ENCODE measurements at regions of chr11 and their contacts with region 1.

Region 1: DNA sequence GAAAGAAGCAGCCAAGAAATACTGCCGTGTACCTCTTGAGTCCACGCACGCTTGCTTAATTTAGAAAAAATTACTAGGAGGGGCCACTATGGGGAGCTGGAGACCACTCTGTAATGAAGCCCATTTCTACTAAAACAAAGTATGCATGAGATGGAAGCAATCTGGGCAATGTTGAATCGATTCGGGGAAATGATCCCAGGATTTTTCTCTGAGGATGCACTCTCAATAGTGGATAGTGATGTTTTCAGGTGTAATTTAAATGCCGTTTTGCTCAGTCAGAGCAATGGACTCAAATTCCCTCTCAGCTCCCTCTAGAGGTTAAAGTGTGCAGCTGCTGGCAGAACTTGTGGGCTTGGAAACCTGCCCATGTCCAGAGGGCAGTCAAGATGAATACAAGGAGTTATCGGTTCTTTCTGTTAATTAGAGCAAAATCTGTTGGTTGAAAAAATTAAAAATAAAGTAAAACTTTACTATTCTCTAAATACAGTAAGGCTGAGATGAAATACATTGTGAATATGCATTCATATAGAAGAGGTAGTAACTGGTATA is 64.1 kb downstream of the ME3 start:
- DNase-seq: peak; percentile 91
- H3K4me3 ChIP-seq: peak overlapping the region in 1 of 3 experiments; percentile 10
- H3K27ac ChIP-seq: peak overlapping the region; percentile 87
- H3K4me1 ChIP-seq: peaks cover 37% of the 10 kb centered on the region
- H3K27me3 ChIP-seq: no peaks in the 10 kb centered on the region
- CTCF ChIP-seq: peak; percentile 77 to 85
- POLR2A ChIP-seq: no peak

Region 2: DNA sequence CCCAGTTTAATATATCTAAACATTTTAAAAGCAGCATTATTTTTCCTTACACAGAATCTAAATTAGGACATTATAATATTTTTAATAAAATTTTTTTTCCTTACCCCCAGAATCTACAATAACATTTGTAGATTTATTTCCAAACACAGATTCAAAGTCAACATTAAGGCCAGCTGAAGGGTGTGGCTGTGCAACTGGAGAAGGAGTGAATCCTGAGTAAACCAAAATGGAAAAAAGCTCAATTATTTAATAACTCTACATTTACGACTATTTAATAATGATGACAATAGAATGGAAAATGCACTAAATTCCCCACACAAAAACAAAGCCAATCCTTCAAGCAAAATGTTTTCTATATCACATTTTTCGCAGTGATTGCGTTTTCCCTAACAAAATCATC is 624.6 kb before region 1 on chr11:
- CTCF ChIA-PET with region 1: no interaction called
- POLR2A ChIA-PET with region 1: no interaction called
- dilution Hi-C with region 1: no loop called
- intact Hi-C with region 1: no loop called
- DNase-seq: no peak
- H3K4me3 ChIP-seq: no peak overlapping the region
- H3K27ac ChIP-seq: no peak overlapping the region
- H3K4me1 ChIP-seq: no peaks in the 10 kb centered on the region
- H3K27me3 ChIP-seq: no peaks in the 10 kb centered on the region
- CTCF ChIP-seq: no peak
- POLR2A ChIP-seq: no peak

Region 3: DNA sequence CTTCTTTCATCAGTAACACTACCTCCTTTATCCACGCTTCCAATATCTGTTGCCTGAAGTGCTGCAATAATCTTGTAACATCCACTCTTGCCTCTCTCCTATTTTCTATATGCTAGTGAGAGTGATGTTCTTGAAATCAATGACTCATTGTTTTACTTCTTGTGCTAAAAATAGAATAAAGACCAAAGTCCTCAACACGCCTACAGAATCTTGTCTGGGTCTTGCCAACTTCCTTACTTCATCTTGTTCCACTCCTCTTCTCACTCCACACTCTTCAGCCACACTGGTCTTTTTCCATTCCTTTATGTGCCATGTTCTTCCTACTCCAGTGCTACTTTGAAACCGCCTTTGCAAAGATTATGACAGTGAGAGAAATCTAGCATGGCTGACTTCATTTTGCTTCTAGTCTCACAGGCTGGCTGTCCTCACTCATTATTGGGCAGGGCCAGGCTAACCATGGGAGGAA is 97.2 kb before region 1 on chr11:
- CTCF ChIA-PET with region 1: interaction called, 12 read pairs
- POLR2A ChIA-PET with region 1: no interaction called
- dilution Hi-C with region 1: no loop called
- intact Hi-C with region 1: loop called (anchors 2 kb)
- DNase-seq: peak; percentile 61
- H3K4me3 ChIP-seq: no peak overlapping the region
- H3K27ac ChIP-seq: no peak overlapping the region
- H3K4me1 ChIP-seq: peaks cover 31% of the 10 kb centered on the region
- H3K27me3 ChIP-seq: no peaks in the 10 kb centered on the region
- CTCF ChIP-seq: no peak
- POLR2A ChIP-seq: no peak

Region 4: GRCh38 chr11:86551286-86552092 is 56.8 kb before region 1 on chr11:
- CTCF ChIA-PET with region 1: interaction called, 18 read pairs
- POLR2A ChIA-PET with region 1: no interaction called
- dilution Hi-C with region 1: no loop called
- intact Hi-C with region 1: no loop called
- DNase-seq: peak; percentile 96
- H3K4me3 ChIP-seq: no peak overlapping the region
- H3K27ac ChIP-seq: peak overlapping the region; percentile 71
- H3K4me1 ChIP-seq: peaks cover 44% of the 10 kb centered on the region
- H3K27me3 ChIP-seq: no peaks in the 10 kb centered on the region
- CTCF ChIP-seq: no peak
- POLR2A ChIP-seq: no peak

Region 5: GRCh38 chr11:86592659-86593451 is 15.5 kb before region 1 on chr11:
- CTCF ChIA-PET with region 1: interaction called, 67 read pairs
- POLR2A ChIA-PET with region 1: no interaction called
- dilution Hi-C with region 1: no loop called
- intact Hi-C with region 1: loop called (anchors 2 kb)
- DNase-seq: peak; percentile 99
- H3K4me3 ChIP-seq: no peak overlapping the region
- H3K27ac ChIP-seq: peak overlapping the region; percentile 99
- H3K4me1 ChIP-seq: peaks cover 60% of the 10 kb centered on the region
- H3K27me3 ChIP-seq: no peaks in the 10 kb centered on the region
- CTCF ChIP-seq: no peak
- POLR2A ChIP-seq: peak; percentile 12

Region 6: DNA sequence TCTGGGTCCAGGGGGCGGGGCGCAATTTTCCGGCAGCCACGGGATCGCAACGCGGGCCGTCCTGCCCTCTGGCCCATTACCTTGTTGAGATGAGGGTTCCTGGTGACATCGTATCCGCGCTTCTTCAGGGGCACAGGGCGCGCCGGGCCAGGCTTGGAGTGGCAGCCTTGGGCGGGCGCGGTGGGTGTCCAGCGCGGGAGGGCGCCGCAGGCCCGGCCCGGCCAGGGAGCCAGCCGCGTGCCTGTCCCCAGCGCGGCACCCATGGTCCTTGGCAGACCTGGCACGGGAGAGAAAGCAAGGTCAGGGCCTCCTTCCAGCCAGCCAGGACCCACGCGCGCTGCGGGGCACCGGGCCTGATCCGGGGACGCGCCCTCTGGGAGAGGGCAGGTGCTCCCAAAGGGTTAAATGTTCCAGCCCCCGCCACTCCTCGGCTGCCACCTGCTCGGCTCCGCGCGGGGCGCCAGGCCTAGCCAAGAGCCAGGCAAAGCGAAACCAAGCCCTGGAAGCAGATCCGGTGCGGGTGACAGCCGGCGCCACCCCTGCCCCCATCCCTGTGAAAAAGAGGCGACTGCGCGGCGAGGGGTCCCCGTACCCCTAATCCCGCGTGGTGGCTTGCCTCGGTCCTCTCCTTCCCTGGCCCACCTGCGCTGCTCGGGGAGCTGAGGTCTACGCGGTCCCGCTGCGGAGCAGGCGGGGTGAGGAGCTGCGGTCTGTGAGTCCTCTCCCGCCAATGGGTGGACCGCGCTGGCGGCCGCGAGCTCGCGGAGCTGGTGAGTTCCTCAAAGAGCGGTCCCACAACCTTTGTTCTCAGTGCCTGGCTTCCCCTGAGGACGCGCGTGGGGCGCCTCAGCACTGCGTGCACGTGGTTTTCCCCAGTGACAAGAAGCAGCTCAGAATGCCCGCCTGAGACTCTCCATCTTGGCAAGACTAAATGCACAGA is 63.6 kb after region 1 on chr11 and contains the start of gene ME3:
- CTCF ChIA-PET with region 1: interaction called, 21 read pairs
- POLR2A ChIA-PET with region 1: no interaction called
- dilution Hi-C with region 1: no loop called
- intact Hi-C with region 1: loop called (anchors 1 kb)
- DNase-seq: peak; percentile 80
- H3K4me3 ChIP-seq: peak within 1 kb of the TSS; percentile 60 to 88 (median 85)
- H3K27ac ChIP-seq: peak within 1 kb of the TSS; percentile 91
- H3K4me1 ChIP-seq: peaks cover 31% of the 10 kb centered on the region
- H3K27me3 ChIP-seq: no peaks in the 10 kb centered on the region
- CTCF ChIP-seq: no peak
- POLR2A ChIP-seq: peak; percentile 80
- total RNA-seq, gene ME3: 26.9 and 27.2 TPM in 2 replicates

Region 7: DNA sequence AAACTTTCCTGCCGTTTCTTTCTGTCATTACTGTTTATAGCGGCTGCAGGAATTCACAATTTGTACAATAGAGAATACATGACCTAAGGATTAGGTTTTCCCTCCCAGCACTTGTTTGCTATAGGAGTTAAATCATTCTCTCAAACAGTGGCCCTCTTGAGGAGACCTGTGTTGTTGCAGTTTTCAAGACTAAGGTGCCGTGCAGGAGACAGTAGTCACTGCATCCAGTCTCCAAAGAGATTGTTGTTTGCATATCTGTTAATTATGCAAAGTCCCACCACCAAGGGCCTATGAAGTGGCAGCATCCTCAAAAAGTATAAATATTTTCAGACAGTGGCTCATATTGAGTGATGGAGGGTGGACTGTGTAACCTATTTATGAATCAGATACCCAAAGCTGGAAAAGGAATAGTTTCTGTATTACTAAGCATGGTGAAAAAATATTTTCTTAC is 194.3 kb after region 1 on chr11:
- CTCF ChIA-PET with region 1: interaction called, 40 read pairs
- POLR2A ChIA-PET with region 1: interaction called, 3 read pairs
- dilution Hi-C with region 1: no loop called
- intact Hi-C with region 1: loop called (anchors 1 kb)
- DNase-seq: peak; percentile 80
- H3K4me3 ChIP-seq: peak overlapping the region; percentile 82 to 96 (median 95)
- H3K27ac ChIP-seq: peak overlapping the region; percentile 96
- H3K4me1 ChIP-seq: peaks cover 63% of the 10 kb centered on the region
- H3K27me3 ChIP-seq: no peaks in the 10 kb centered on the region
- CTCF ChIP-seq: peak; percentile 57 to 60
- POLR2A ChIP-seq: no peak

Measured in endothelial cell of umbilical vein (primary cell).